ENCODE measurements at regions of chr5 and their contacts with region 1.

Region 1: GRCh38 chr5:135332519-135333150 is 66.4 kb downstream of the MACROH2A1 start:
- DNase-seq: peak; percentile 73
- H3K4me3 ChIP-seq: no peak overlapping the region
- H3K27ac ChIP-seq: no peak overlapping the region
- H3K4me1 ChIP-seq: no peaks in the 10 kb centered on the region
- H3K27me3 ChIP-seq: no peaks in the 10 kb centered on the region
- CTCF ChIP-seq: peak; percentile 33 to 47
- POLR2A ChIP-seq: no peak

Region 2: DNA sequence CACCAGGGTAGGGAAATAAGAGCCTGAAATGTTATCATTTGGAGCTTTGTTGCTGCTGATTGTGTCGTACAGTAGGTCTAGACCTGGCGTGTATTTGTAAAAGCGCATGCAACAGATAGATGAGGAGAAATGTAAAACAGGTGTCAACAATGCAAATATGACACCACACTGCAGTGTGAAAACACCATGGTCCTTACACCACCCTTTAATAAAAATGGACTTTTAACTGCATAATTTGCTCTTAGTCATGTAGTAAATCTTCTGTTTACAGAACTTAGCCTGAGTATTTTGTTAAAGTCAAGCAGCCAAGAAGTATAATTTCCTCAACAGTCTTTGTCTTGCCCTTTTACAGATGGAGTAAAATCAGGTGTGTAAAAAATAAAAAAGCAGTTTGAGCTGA is 413.8 kb before region 1 on chr5:
- CTCF ChIA-PET with region 1: no interaction called
- POLR2A ChIA-PET with region 1: no interaction called
- dilution Hi-C with region 1: no loop called
- intact Hi-C with region 1: loop called (anchors 1 kb)
- DNase-seq: no peak
- H3K4me3 ChIP-seq: no peak overlapping the region
- H3K27ac ChIP-seq: no peak overlapping the region
- H3K4me1 ChIP-seq: no peaks in the 10 kb centered on the region
- H3K27me3 ChIP-seq: no peaks in the 10 kb centered on the region
- CTCF ChIP-seq: no peak
- POLR2A ChIP-seq: no peak

Region 3: GRCh38 chr5:134958765-134959168 is 373.9 kb before region 1 on chr5:
- CTCF ChIA-PET with region 1: no interaction called
- POLR2A ChIA-PET with region 1: no interaction called
- dilution Hi-C with region 1: no loop called
- intact Hi-C with region 1: loop called (anchors 10 kb)
- DNase-seq: no peak
- H3K4me3 ChIP-seq: no peak overlapping the region
- H3K27ac ChIP-seq: no peak overlapping the region
- H3K4me1 ChIP-seq: no peaks in the 10 kb centered on the region
- H3K27me3 ChIP-seq: no peaks in the 10 kb centered on the region
- CTCF ChIP-seq: no peak
- POLR2A ChIP-seq: no peak

Region 4: GRCh38 chr5:135034236-135034962 is 298.2 kb before region 1 on chr5:
- CTCF ChIA-PET with region 1: interaction called, 3 read pairs
- POLR2A ChIA-PET with region 1: no interaction called
- dilution Hi-C with region 1: no loop called
- intact Hi-C with region 1: loop called (anchors 5 kb)
- DNase-seq: no peak
- H3K4me3 ChIP-seq: no peak overlapping the region
- H3K27ac ChIP-seq: no peak overlapping the region
- H3K4me1 ChIP-seq: peaks cover 5% of the 10 kb centered on the region
- H3K27me3 ChIP-seq: peaks cover 85 to 95% of the 10 kb centered on the region in 2 experiments
- CTCF ChIP-seq: no peak
- POLR2A ChIP-seq: no peak

Region 5: GRCh38 chr5:135208903-135209721 is 123.5 kb before region 1 on chr5:
- CTCF ChIA-PET with region 1: interaction called, 12 read pairs
- POLR2A ChIA-PET with region 1: no interaction called
- dilution Hi-C with region 1: no loop called
- intact Hi-C with region 1: loop called (anchors 1 kb)
- DNase-seq: peak; percentile 97
- H3K4me3 ChIP-seq: no peak overlapping the region
- H3K27ac ChIP-seq: peak overlapping the region; percentile 59
- H3K4me1 ChIP-seq: peaks cover 22% of the 10 kb centered on the region
- H3K27me3 ChIP-seq: no peaks in the 10 kb centered on the region
- CTCF ChIP-seq: peak; percentile 43 to 46
- POLR2A ChIP-seq: no peak

Region 6: DNA sequence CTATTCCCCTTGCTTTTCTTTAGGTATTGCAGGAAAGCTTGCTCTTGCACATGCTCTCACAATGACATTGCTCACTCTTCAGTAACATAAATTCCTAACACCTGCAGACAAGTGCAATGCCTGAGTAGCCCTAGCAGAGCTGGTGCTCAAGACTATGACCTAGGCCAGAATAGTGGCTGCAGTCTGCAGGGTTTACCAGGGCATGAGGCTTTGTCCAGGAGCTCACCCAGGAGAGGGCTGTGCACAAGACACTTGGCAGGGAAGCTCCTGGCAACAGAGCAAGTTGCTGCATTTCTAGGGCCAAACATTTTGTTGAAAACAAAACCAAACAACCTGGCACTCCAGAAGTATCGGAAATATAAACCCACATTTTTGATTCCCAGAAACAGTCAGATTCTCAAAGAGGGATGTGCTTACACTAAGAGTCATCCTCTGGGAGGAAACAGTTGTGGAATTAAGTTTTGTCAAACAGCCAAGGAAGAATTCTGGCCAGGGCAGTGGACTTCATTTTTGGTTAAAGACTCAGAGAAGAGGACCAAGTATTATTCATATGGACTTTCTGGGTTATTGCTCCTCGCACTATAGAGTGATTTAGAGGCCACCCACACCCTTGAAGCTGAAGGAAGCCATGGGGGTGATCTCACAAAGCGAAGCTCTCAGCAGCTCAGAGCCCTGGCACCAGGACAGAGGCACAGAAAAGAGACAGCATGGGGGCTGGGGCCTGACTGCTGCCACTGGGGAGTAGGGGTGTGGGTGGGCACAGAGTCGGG is 21.5 kb after region 1 on chr5:
- CTCF ChIA-PET with region 1: no interaction called
- POLR2A ChIA-PET with region 1: no interaction called
- dilution Hi-C with region 1: no loop called
- intact Hi-C with region 1: no loop called
- DNase-seq: no peak
- H3K4me3 ChIP-seq: no peak overlapping the region
- H3K27ac ChIP-seq: no peak overlapping the region
- H3K4me1 ChIP-seq: no peaks in the 10 kb centered on the region
- H3K27me3 ChIP-seq: no peaks in the 10 kb centered on the region
- CTCF ChIP-seq: no peak
- POLR2A ChIP-seq: no peak

Region 7: GRCh38 chr5:135373736-135374515 is 41.3 kb after region 1 on chr5:
- CTCF ChIA-PET with region 1: no interaction called
- POLR2A ChIA-PET with region 1: no interaction called
- dilution Hi-C with region 1: no loop called
- intact Hi-C with region 1: no loop called
- DNase-seq: no peak
- H3K4me3 ChIP-seq: no peak overlapping the region
- H3K27ac ChIP-seq: no peak overlapping the region
- H3K4me1 ChIP-seq: peaks cover 21% of the 10 kb centered on the region
- H3K27me3 ChIP-seq: no peaks in the 10 kb centered on the region
- CTCF ChIP-seq: no peak
- POLR2A ChIP-seq: no peak